ENCODE measurements at regions of chr2 and their contacts with region 1.

Region 1: GRCh38 chr2:108583903-108584520 is 49.7 kb downstream of the LIMS1 start:
- DNase-seq: peak; percentile 64
- H3K4me3 Mint-ChIP-seq: no peak overlapping the region
- H3K27ac Mint-ChIP-seq: no peak overlapping the region
- H3K4me1 Mint-ChIP-seq: peaks cover 60% of the 10 kb centered on the region
- H3K27me3 Mint-ChIP-seq: no peaks in the 10 kb centered on the region
- CTCF ChIP-seq: peak; percentile 40

Region 2: GRCh38 chr2:108215794-108216211 is 368.2 kb before region 1 on chr2:
- CTCF ChIA-PET with region 1: interaction called, 5 read pairs
- intact Hi-C with region 1: loop called (anchors 5 kb)
- DNase-seq: peak; percentile 54
- H3K4me3 Mint-ChIP-seq: no peak overlapping the region
- H3K27ac Mint-ChIP-seq: no peak overlapping the region
- H3K4me1 Mint-ChIP-seq: no peaks in the 10 kb centered on the region
- H3K27me3 Mint-ChIP-seq: no peaks in the 10 kb centered on the region
- CTCF ChIP-seq: no peak

Region 3: DNA sequence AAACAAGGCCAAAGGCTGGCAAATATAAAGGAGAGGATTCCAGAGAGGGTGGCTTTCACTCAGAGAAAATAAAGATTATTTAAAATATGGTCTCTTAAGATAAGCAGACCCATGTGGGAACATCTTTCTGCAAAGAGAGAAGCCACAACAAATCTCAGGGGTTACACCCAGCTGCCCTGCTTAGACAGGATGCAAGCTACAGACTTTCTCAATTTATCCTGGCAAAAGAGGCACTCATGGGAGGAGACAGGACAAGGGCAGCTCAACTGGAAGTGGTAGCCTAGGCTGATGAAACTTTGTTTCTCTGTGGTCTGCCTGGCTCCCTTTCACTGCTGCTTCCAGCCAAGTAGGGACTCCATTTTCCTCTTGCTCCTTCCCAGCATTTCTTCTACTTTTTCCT is 232.1 kb before region 1 on chr2:
- CTCF ChIA-PET with region 1: interaction called, 4 read pairs
- intact Hi-C with region 1: loop called (anchors 1 kb)
- DNase-seq: no peak
- H3K4me3 Mint-ChIP-seq: no peak overlapping the region
- H3K27ac Mint-ChIP-seq: no peak overlapping the region
- H3K4me1 Mint-ChIP-seq: no peaks in the 10 kb centered on the region
- H3K27me3 Mint-ChIP-seq: no peaks in the 10 kb centered on the region
- CTCF ChIP-seq: no peak

Region 4: GRCh38 chr2:108417255-108417654 is 166.8 kb before region 1 on chr2:
- CTCF ChIA-PET with region 1: interaction called, 3 read pairs
- intact Hi-C with region 1: loop called (anchors 5 kb)
- DNase-seq: peak; percentile 35
- H3K4me3 Mint-ChIP-seq: no peak overlapping the region
- H3K27ac Mint-ChIP-seq: no peak overlapping the region
- H3K4me1 Mint-ChIP-seq: no peaks in the 10 kb centered on the region
- H3K27me3 Mint-ChIP-seq: no peaks in the 10 kb centered on the region
- CTCF ChIP-seq: peak; percentile 42

Region 5: GRCh38 chr2:108448678-108449493 is 135.1 kb before region 1 on chr2 and contains the start of gene GCC2:
- CTCF ChIA-PET with region 1: no interaction called
- intact Hi-C with region 1: no loop called
- DNase-seq: peak; percentile 95
- H3K4me3 Mint-ChIP-seq: peak within 1 kb of the TSS; percentile 99
- H3K27ac Mint-ChIP-seq: peak within 1 kb of the TSS; percentile 99
- H3K4me1 Mint-ChIP-seq: peaks cover 17% of the 10 kb centered on the region
- H3K27me3 Mint-ChIP-seq: no peaks in the 10 kb centered on the region
- CTCF ChIP-seq: no peak
- total RNA-seq, gene GCC2: 54.9 and 60.4 TPM in 2 replicates

Region 6: GRCh38 chr2:108485253-108485652 is 98.8 kb before region 1 on chr2:
- CTCF ChIA-PET with region 1: no interaction called
- intact Hi-C with region 1: loop called (anchors 5 kb)
- DNase-seq: no peak
- H3K4me3 Mint-ChIP-seq: no peak overlapping the region
- H3K27ac Mint-ChIP-seq: no peak overlapping the region
- H3K4me1 Mint-ChIP-seq: no peaks in the 10 kb centered on the region
- H3K27me3 Mint-ChIP-seq: no peaks in the 10 kb centered on the region
- CTCF ChIP-seq: no peak

Region 7: DNA sequence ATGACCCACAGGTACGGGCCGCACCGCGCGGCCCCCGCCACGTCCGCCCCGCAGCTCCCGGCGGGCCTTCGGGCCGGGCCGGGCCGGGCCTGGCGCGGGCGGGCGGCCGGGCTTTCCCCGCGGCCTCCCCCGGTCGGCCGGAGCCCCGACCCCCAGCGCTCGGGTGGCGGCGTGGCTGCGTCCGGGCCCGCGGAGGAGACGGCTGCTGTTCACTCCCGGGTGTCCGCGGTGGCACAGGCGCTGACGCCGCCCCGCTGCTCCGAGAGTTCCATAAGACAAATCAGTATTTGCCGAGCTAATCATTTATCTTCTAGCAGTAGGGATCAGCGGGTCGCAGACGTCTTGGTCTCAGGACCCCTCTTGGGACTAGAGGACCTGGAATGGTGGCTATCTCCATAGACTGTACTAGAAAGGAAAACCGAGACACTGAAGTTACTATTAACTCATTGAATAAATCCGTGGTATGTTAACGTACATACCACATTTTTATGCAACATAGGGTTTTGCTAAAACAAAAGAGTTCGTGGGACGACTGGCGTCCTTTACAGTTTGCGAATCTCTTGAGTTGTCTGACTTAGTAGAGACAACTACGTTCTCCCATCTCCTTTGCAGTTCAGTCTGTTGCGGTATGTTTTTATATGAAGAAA is 49.3 kb before region 1 on chr2:
- CTCF ChIA-PET with region 1: interaction called, 4 read pairs
- intact Hi-C with region 1: loop called (anchors 5 kb)
- DNase-seq: peak; percentile 28
- H3K4me3 Mint-ChIP-seq: peak overlapping the region; percentile 87
- H3K27ac Mint-ChIP-seq: peak overlapping the region; percentile 85
- H3K4me1 Mint-ChIP-seq: peaks cover 35% of the 10 kb centered on the region
- H3K27me3 Mint-ChIP-seq: no peaks in the 10 kb centered on the region
- CTCF ChIP-seq: no peak

Region 8: DNA sequence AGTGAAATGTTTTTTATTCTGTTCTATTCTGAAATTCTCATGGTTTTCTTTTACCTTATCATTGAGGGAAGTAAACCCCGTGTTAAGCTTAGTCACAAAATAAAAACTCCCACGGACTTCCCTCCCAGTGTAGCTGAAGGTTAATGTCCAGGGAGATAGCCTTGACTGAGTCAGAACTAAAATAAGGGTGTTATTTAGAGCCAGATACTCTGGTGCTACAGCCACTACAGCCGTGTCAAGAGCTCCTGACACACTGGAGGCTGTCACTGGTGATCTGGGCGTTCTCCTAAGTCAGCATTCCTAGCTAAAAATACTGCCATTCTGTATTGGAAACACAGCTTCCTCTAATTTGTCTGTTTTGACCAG is 53.3 kb after region 1 on chr2:
- CTCF ChIA-PET with region 1: interaction called, 10 read pairs
- intact Hi-C with region 1: no loop called
- DNase-seq: no peak
- H3K4me3 Mint-ChIP-seq: no peak overlapping the region
- H3K27ac Mint-ChIP-seq: no peak overlapping the region
- H3K4me1 Mint-ChIP-seq: peaks cover 74% of the 10 kb centered on the region
- H3K27me3 Mint-ChIP-seq: no peaks in the 10 kb centered on the region
- CTCF ChIP-seq: no peak